ENCODE measurements at regions of chr1 and their contacts with region 1.

Region 1: DNA sequence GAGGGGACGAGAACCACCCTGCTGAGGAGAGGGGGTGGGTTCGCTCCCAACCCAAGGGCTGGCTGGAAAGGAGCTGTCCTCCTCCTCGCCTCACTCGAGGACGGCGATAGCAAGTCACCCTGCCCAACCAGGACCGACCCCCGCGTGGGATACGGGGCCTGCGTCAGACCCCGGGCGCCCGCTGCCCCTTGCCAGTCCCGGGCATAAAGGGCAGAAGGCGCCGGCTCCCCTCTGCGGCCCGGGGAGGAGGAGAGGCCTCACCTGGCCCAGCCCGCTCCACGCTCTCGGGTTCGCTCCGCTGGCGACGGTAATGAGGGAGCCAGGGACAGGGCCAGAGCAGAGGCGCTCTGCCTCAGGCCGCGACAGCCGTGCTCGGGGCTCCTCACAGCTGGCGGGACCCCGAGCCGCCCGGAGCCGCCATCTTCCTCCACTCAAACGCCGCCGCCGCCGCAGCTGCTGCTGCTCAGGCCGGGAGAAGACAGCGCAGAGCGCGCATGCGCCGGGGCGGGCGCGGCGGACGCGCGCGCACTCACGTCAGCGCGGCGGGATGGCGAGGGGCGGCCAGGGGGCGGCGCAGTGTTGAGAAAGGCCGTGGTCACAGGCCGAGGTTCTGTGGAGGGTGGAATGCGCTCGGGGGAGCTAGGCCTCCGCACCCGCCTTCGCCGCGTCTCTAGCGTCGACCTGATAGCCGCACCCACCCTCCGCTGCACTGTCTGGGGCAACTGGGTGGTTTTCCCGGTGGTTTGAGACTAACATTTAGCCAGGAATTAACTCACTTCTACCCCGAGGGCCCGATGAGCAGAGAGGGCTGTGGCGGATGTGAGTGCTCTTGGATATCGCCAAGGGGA is at the start of gene FBXO42:
- DNase-seq: peak; percentile 91 to 96
- ATAC-seq: peak; percentile 97 to 99 (median 98)
- H3K4me3 ChIP-seq: peak within 1 kb of the TSS; percentile 96
- H3K27ac ChIP-seq: peak within 1 kb of the TSS; percentile 97
- H3K4me1 ChIP-seq: peaks cover 34% of the 10 kb centered on the region
- H3K27me3 ChIP-seq: no peaks in the 10 kb centered on the region
- CTCF ChIP-seq: peak; percentile 36
- total RNA-seq, gene FBXO42: 14.7 to 24.4 (median 19.8) TPM

Region 2: GRCh38 chr1:16300436-16300835 is 51.8 kb before region 1 on chr1:
- intact Hi-C with region 1: loop called in 1 of 2 experiments (anchors 5 kb)
- DNase-seq: no peak
- ATAC-seq: peak; percentile 33 to 72 (median 56)
- H3K4me3 ChIP-seq: no peak overlapping the region
- H3K27ac ChIP-seq: no peak overlapping the region
- H3K4me1 ChIP-seq: peaks cover 8% of the 10 kb centered on the region
- H3K27me3 ChIP-seq: no peaks in the 10 kb centered on the region
- CTCF ChIP-seq: no peak

Region 3: GRCh38 chr1:16324456-16324890 is 27.7 kb before region 1 on chr1:
- intact Hi-C with region 1: no loop called
- DNase-seq: peak in 1 of 2 donors; percentile 19
- ATAC-seq: peak; percentile 88 to 94 (median 92)
- H3K4me3 ChIP-seq: peak overlapping the region; percentile 37
- H3K27ac ChIP-seq: peak overlapping the region; percentile 62
- H3K4me1 ChIP-seq: peaks cover 41% of the 10 kb centered on the region
- H3K27me3 ChIP-seq: no peaks in the 10 kb centered on the region
- CTCF ChIP-seq: no peak